Mammary epithelial cell (primary cell): ENCODE measurements at regions of chr17 and their contacts with region 1.

Region 1: GRCh38 chr17:5049314-5049895 is 14.2 kb upstream of the SLC52A1 start:
- DNase-seq: no peak
- H3K4me3 ChIP-seq: no peak overlapping the region
- H3K27ac ChIP-seq: no peak overlapping the region
- H3K4me1 ChIP-seq: no peaks in the 10 kb centered on the region
- H3K27me3 ChIP-seq: no peaks in the 10 kb centered on the region
- CTCF ChIP-seq: no peak

Region 2: GRCh38 chr17:4997302-4998026 is 51.9 kb before region 1 on chr17 and contains the starts of genes INCA1 and KIF1C:
- CTCF ChIA-PET with region 1: no interaction called
- dilution Hi-C with region 1: loop called (anchors 5 kb)
- in situ Hi-C with region 1: no loop called
- intact Hi-C with region 1: no loop called
- DNase-seq: peak; percentile 90
- H3K4me3 ChIP-seq: peak within 1 kb of the TSS; percentile 65 to 95 (median 82)
- H3K27ac ChIP-seq: peak within 1 kb of the TSS; percentile 43
- H3K4me1 ChIP-seq: peaks cover 12% of the 10 kb centered on the region
- H3K27me3 ChIP-seq: no peaks in the 10 kb centered on the region
- CTCF ChIP-seq: no peak
- total RNA-seq, gene INCA1: 0.33 to 0.42 TPM
- total RNA-seq, gene KIF1C: 105 to 198 TPM

Region 3: GRCh38 chr17:5019475-5019956 is 29.9 kb before region 1 on chr17:
- CTCF ChIA-PET with region 1: interaction called, 12 read pairs
- dilution Hi-C with region 1: no loop called
- in situ Hi-C with region 1: no loop called
- intact Hi-C with region 1: no loop called
- DNase-seq: no peak
- H3K4me3 ChIP-seq: no peak overlapping the region
- H3K27ac ChIP-seq: no peak overlapping the region
- H3K4me1 ChIP-seq: no peaks in the 10 kb centered on the region
- H3K27me3 ChIP-seq: no peaks in the 10 kb centered on the region
- CTCF ChIP-seq: no peak